Transverse colon (tissue), 4 donors: ENCODE measurements at regions of chr6 and their contacts with region 1.

Region 1: DNA sequence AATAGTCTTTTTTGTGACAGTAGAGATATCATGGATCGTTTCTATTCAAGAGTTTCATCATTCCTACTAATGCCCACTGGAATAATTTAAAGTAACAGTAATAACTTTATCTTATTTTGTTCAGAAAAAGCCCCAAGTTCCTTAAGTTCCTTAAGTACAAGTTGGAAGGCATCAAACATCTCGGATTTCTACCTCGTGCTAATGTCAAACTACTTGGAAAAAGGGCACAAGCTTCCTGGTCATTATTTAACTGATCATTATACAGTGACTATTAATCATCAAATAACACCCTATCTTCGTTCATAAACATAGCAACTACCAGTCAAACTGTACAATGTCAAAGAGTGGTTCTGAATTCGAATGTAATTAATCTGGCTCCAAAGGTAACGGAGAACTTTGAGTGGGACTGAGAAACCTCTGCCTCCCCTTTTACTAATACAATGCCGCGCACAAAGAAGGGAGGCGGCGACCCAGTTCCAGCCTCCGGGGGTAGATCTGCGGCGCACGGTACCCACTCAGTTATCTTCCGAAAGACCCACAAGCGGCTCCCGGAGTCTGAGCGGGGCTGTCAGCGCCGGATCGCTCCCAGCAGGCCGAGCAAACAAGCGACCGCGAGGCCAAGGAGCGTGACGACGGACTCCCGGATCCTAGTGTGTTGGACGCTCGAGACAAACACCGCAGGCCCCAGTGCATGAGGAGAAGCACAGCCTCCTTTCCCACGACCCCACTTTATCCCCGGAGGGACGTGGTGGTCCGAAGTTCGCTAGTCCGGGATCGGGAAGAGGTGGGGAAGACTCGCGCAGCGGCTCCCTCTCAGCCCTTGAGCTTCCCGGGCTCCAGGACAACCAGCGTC is 716 bp downstream of the SHPRH start:
- DNase-seq: peak; percentile 44
- H3K4me3 ChIP-seq: peak overlapping the region; percentile 64 to 97 (median 80)
- H3K27ac ChIP-seq: peak overlapping the region; percentile 80 to 92 (median 89)
- H3K4me1 ChIP-seq: peaks cover 15 to 30% (median 22%) of the 10 kb centered on the region in 4 donors
- H3K27me3 ChIP-seq: no peaks in the 10 kb centered on the region
- CTCF ChIP-seq: no peak
- EP300 ChIP-seq: no peak
- POLR2A ChIP-seq: no peak

Region 2: GRCh38 chr6:144158133-144158532 is 1805.3 kb before region 1 on chr6:
- in situ Hi-C with region 1: no loop called
- intact Hi-C with region 1: no loop called
- DNase-seq: no peak
- H3K4me3 ChIP-seq: no peak overlapping the region
- H3K27ac ChIP-seq: peak overlapping the region in 1 of 4 donors; percentile 19
- H3K4me1 ChIP-seq: peaks cover 0 to 9% (median 3%) of the 10 kb centered on the region in 4 donors
- H3K27me3 ChIP-seq: no peaks in the 10 kb centered on the region
- CTCF ChIP-seq: no peak
- EP300 ChIP-seq: no peak
- POLR2A ChIP-seq: no peak

Region 3: GRCh38 chr6:145814501-145815308 is 148.7 kb before region 1 on chr6 and contains the start of gene FBXO30:
- in situ Hi-C with region 1: loop called in 1 of 4 experiments (anchors 25 kb)
- intact Hi-C with region 1: no loop called
- DNase-seq: peak; percentile 89
- H3K4me3 ChIP-seq: peak within 1 kb of the TSS; percentile 67 to 95 (median 80)
- H3K27ac ChIP-seq: peak within 1 kb of the TSS; percentile 95 to 99 (median 97)
- H3K4me1 ChIP-seq: peaks cover 0 to 46% (median 19%) of the 10 kb centered on the region in 4 donors
- H3K27me3 ChIP-seq: no peaks in the 10 kb centered on the region
- CTCF ChIP-seq: peak in 4 of 5 experiments; percentile 22 to 66 (median 52)
- EP300 ChIP-seq: no peak
- POLR2A ChIP-seq: peak; percentile 69
- total RNA-seq, gene FBXO30: 6.0 to 13.0 (median 9.2) TPM

Region 4: DNA sequence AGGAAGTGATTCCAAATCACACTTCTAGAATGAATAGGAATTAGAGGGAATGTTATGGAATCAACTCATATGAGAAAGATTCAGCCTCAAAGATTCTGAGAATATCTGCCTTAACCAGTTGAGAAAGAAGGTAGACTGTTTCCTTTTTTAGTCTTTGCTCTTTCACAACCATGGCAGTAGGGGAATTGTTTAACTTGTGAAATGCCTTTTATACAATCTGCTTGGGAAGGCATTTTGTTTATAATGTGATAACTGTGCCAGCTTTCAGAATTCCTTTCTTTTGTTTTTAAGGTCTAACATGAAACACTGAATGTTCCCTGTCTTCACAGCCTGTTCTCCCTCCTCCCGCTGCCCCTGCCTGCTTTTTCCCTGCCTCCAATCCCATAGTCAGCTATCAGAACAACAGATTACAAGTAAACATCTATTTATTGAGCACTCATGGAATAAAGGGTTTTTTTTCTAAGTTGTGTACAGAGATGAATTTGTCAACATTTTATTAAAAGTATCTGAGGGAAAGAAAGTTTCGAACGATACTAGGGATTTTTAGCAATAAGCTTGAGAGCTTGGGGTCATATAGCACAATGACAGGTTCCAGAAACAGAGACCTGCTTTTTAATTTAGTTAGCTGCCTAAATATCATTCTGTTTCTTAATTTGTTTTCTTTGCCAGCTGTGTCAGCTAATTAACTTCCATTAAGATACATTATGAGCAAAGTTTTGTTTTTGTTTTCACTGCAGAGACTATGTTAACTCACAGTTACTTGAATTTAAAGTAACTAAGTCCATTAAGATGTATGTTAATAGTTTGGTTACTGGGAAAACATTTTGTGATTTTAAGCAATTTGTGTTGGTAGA is 120.5 kb before region 1 on chr6:
- in situ Hi-C with region 1: no loop called
- intact Hi-C with region 1: no loop called
- DNase-seq: no peak
- H3K4me3 ChIP-seq: no peak overlapping the region
- H3K27ac ChIP-seq: peak overlapping the region in 3 of 4 donors; percentile 50 to 67 (median 65)
- H3K4me1 ChIP-seq: peaks cover 0 to 8% (median 0%) of the 10 kb centered on the region in 4 donors
- H3K27me3 ChIP-seq: no peaks in the 10 kb centered on the region
- CTCF ChIP-seq: no peak
- EP300 ChIP-seq: no peak
- POLR2A ChIP-seq: no peak

Region 5: GRCh38 chr6:146047371-146047770 is 83.9 kb after region 1 on chr6:
- in situ Hi-C with region 1: no loop called
- intact Hi-C with region 1: no loop called
- DNase-seq: no peak
- H3K4me3 ChIP-seq: no peak overlapping the region
- H3K27ac ChIP-seq: no peak overlapping the region
- H3K4me1 ChIP-seq: no peaks in the 10 kb centered on the region
- H3K27me3 ChIP-seq: no peaks in the 10 kb centered on the region
- CTCF ChIP-seq: no peak
- EP300 ChIP-seq: no peak
- POLR2A ChIP-seq: no peak

Region 6: DNA sequence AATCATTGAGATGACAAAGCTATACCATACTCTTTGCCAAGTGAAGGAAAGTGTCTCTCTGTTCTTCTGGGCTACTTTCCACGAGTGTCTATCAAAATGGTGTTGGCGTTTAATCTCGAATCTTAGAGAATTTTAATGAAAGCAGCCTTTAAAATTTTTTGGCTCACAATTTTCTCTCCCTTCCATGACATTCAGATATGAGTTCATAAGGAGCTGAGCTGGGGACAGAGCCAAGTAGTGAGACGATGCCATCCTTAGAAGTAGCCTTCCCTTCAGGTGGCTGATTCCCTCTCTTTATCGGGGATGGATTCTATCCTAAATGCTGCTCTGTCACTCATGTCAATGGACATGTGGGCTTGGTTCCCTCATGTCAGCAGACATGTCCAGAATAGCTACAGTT is 198.2 kb after region 1 on chr6:
- in situ Hi-C with region 1: no loop called
- intact Hi-C with region 1: no loop called
- DNase-seq: no peak
- H3K4me3 ChIP-seq: no peak overlapping the region
- H3K27ac ChIP-seq: no peak overlapping the region
- H3K4me1 ChIP-seq: no peaks in the 10 kb centered on the region
- H3K27me3 ChIP-seq: no peaks in the 10 kb centered on the region
- CTCF ChIP-seq: no peak
- EP300 ChIP-seq: no peak
- POLR2A ChIP-seq: no peak

Region 7: GRCh38 chr6:146543211-146543939 is 579.9 kb after region 1 on chr6 and contains the start of gene RAB32:
- in situ Hi-C with region 1: loop called in 1 of 4 experiments (anchors 25 kb)
- intact Hi-C with region 1: no loop called
- DNase-seq: peak; percentile 93
- H3K4me3 ChIP-seq: peak within 1 kb of the TSS; percentile 64 to 89 (median 77)
- H3K27ac ChIP-seq: peak within 1 kb of the TSS; percentile 98 to 100 (median 99)
- H3K4me1 ChIP-seq: peaks cover 8 to 39% (median 24%) of the 10 kb centered on the region in 4 donors
- H3K27me3 ChIP-seq: no peaks in the 10 kb centered on the region
- CTCF ChIP-seq: peak; percentile 67 to 87 (median 79)
- EP300 ChIP-seq: peak; percentile 6
- POLR2A ChIP-seq: no peak
- total RNA-seq, gene RAB32: 3.7 to 43.4 (median 29.1) TPM